SK-N-SH (cell line): ENCODE measurements at regions of chr12 and their contacts with region 1.

Region 1: DNA sequence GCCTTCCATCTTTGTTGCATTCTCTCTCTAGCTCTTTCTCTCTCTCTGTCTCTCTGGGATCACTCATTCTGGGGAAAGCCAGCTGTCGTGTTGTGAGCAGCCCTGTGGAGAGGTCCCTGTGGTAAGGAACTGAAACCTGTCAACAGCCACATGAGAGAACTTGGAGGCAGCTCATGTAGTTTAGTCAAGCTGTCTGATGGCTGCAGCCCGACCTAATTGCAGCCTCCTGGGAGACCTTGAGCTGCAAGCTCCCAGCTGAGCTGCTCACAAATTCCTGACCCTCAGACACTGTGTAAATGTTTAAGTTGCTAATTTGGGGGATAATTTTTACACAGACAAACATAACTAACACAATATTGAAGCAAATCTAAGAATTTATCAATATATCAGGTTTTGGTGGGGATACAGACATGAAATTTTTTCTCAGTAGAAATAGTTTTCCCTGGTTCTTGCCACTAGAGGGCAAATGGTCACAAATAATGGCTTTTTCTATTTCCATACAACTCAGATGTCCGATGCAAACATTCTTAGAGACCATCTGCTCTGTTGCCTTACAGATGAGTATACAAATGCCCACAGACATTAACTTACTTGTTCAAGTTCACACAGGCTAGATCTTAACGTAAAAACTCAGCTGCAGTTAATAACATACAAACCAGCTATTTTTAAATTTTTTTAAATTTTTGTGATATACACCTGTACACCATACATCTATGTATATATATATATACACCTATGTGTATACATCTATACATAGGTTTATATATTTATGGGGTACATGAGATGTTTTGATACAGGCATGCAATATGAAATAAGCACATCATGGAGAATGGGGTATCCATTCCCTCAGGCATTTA is 15.5 kb upstream of the KRR1 start:
- DNase-seq: peak; percentile 51
- H3K4me3 ChIP-seq: no peak overlapping the region; a peak in 1 of 4 replicates
- H3K27ac ChIP-seq: no peak overlapping the region
- H3K4me1 ChIP-seq: no peaks in the 10 kb centered on the region; a peak in 1 of 4 replicates
- H3K27me3 ChIP-seq: no peaks in the 10 kb centered on the region
- CTCF ChIP-seq: peak; percentile 84
- EP300 ChIP-seq: no peak
- RAD21 ChIP-seq: peak; percentile 94

Region 2: GRCh38 chr12:75446857-75447256 is 80.0 kb before region 1 on chr12:
- CTCF ChIA-PET with region 1: no interaction called
- POLR2A ChIA-PET with region 1: no interaction called
- DNase-seq: no peak
- H3K4me3 ChIP-seq: no peak overlapping the region
- H3K27ac ChIP-seq: peak overlapping the region; percentile 16 to 79; a peak in 3 of 4 replicates
- H3K4me1 ChIP-seq: peaks cover 0 to 27% of the 10 kb centered on the region in 2 experiments; a peak in 2 of 4 replicates
- H3K27me3 ChIP-seq: no peaks in the 10 kb centered on the region
- CTCF ChIP-seq: no peak
- EP300 ChIP-seq: peak in 1 of 2 experiments; percentile 93; a peak in 2 of 4 replicates
- RAD21 ChIP-seq: no peak

Region 3: DNA sequence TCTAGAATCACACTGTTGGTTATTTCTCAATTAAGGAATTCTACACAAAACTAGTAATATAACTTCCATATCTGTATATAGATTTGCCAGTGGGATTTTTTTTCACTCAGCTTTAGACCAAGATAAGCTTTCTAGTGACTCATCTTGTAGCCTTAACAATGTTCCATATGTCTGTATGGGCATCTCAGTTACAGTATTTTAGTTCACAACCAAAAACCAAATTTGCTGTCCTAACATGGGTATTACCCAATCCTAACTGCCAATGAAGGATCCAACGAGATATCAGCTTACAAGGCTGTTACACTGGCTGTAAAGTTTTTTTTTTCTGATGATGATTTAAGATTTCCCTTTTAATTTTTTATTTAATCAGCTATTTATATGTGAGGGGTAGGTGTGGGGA is 16.1 kb after region 1 on chr12:
- CTCF ChIA-PET with region 1: interaction called, 11 read pairs
- POLR2A ChIA-PET with region 1: no interaction called
- DNase-seq: no peak
- H3K4me3 ChIP-seq: no peak overlapping the region
- H3K27ac ChIP-seq: no peak overlapping the region
- H3K4me1 ChIP-seq: no peaks in the 10 kb centered on the region; a peak in 1 of 4 replicates
- H3K27me3 ChIP-seq: no peaks in the 10 kb centered on the region
- CTCF ChIP-seq: no peak
- EP300 ChIP-seq: no peak
- RAD21 ChIP-seq: no peak

Region 4: GRCh38 chr12:75560167-75560566 is 33.3 kb after region 1 on chr12:
- CTCF ChIA-PET with region 1: interaction called, 10 read pairs
- POLR2A ChIA-PET with region 1: no interaction called
- DNase-seq: peak; percentile 7
- H3K4me3 ChIP-seq: no peak overlapping the region
- H3K27ac ChIP-seq: no peak overlapping the region
- H3K4me1 ChIP-seq: peaks cover 0 to 2% of the 10 kb centered on the region in 2 experiments; a peak in 1 of 4 replicates
- H3K27me3 ChIP-seq: no peaks in the 10 kb centered on the region
- CTCF ChIP-seq: peak; percentile 60
- EP300 ChIP-seq: no peak
- RAD21 ChIP-seq: peak; percentile 88

Region 5: GRCh38 chr12:75631831-75632230 is 104.9 kb after region 1 on chr12:
- CTCF ChIA-PET with region 1: no interaction called
- POLR2A ChIA-PET with region 1: no interaction called
- DNase-seq: no peak
- H3K4me3 ChIP-seq: no peak overlapping the region
- H3K27ac ChIP-seq: no peak overlapping the region
- H3K4me1 ChIP-seq: no peaks in the 10 kb centered on the region
- H3K27me3 ChIP-seq: no peaks in the 10 kb centered on the region
- CTCF ChIP-seq: no peak
- EP300 ChIP-seq: no peak
- RAD21 ChIP-seq: no peak

Region 6: DNA sequence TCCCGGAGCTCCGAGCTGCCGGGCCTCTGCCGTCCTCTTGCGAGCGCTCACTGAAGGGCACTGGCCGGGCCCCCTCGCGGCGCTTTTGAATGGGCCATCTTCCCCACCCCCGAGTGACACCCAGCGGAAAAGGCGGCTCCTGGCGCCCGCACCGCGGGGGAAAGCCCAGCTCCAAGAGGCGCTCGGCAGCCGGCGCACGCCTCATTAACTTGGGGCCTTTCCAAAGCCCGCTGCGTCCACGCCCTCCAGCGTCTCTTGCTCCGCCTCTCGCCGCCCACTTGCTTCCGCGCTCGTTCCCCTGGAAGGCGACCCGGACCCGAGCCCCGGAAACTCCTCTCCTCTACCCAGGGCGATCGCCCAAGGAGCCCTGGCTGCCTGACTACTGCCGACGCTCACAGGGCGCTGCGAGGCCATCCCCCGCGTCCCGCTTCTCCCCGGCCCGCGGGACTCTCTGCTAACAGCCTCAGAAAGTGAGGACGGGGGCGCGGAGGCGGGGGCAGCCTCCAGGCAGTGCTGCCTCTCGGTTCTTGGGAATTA is 504.7 kb after region 1 on chr12 and contains the start of gene PHLDA1:
- CTCF ChIA-PET with region 1: interaction called, 166 read pairs
- POLR2A ChIA-PET with region 1: no interaction called
- DNase-seq: peak; percentile 88
- H3K4me3 ChIP-seq: peak within 1 kb of the TSS; percentile 80 to 91
- H3K27ac ChIP-seq: peak within 1 kb of the TSS; percentile 69 to 92
- H3K4me1 ChIP-seq: peaks cover 12 to 15% of the 10 kb centered on the region in 2 experiments
- H3K27me3 ChIP-seq: no peaks in the 10 kb centered on the region
- CTCF ChIP-seq: peak; percentile 59
- EP300 ChIP-seq: peak in 1 of 2 experiments; percentile 51; a peak in 1 of 4 replicates
- RAD21 ChIP-seq: peak; percentile 61
- polyA plus RNA-seq, gene PHLDA1: 21.6 and 26.2 TPM in 2 replicates

Region 7: DNA sequence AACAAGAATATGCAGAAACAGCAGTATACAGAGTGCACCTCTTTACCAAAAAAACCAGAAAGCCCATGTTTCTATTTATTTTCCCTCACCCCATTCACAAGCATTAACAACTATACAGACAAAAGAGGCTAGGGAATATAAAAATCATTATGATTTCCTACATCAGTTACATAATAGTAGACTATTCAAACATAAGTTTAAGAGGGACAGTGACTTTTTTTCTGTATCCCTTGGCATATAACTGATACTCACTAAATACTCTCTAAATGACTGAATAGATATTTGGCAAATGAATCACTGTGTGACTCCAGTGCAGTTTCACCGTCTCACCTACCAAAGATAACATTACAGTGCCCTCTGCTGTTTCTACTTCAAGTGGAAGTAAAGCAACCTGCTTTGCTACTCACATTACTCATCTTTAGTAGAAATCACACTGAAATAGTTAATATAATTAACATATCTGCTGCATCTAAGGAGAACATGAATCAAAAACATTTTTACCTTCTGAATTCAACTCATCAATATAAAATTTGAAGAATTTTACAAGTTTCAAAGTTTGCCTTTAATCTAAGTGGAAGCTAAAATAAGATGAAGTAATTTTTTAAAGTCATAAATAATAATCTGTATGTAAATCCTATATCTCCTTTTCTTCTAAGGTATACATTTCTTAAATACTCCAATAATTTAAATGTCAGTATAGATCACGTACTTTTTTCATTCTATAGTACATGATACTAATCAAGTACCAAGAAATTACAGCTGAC is 928.9 kb after region 1 on chr12:
- CTCF ChIA-PET with region 1: interaction called, 30 read pairs
- POLR2A ChIA-PET with region 1: no interaction called
- DNase-seq: peak; percentile 42
- H3K4me3 ChIP-seq: no peak overlapping the region; a peak in 1 of 4 replicates
- H3K27ac ChIP-seq: peak overlapping the region; percentile 56 to 67; a peak in 3 of 4 replicates
- H3K4me1 ChIP-seq: peaks cover 0 to 7% of the 10 kb centered on the region in 2 experiments; a peak in 2 of 4 replicates
- H3K27me3 ChIP-seq: no peaks in the 10 kb centered on the region
- CTCF ChIP-seq: peak; percentile 82
- EP300 ChIP-seq: no peak; a peak in 1 of 4 replicates
- RAD21 ChIP-seq: peak; percentile 95

Region 8: GRCh38 chr12:76586764-76587395 is 1060.0 kb after region 1 on chr12:
- CTCF ChIA-PET with region 1: interaction called, 11 read pairs
- POLR2A ChIA-PET with region 1: no interaction called
- DNase-seq: peak; percentile 16
- H3K4me3 ChIP-seq: no peak overlapping the region
- H3K27ac ChIP-seq: no peak overlapping the region
- H3K4me1 ChIP-seq: no peaks in the 10 kb centered on the region
- H3K27me3 ChIP-seq: no peaks in the 10 kb centered on the region
- CTCF ChIP-seq: peak; percentile 88
- EP300 ChIP-seq: no peak
- RAD21 ChIP-seq: peak; percentile 83